K562 (cell line): ENCODE measurements at regions of chr10 and their contacts with region 1.

Region 1: DNA sequence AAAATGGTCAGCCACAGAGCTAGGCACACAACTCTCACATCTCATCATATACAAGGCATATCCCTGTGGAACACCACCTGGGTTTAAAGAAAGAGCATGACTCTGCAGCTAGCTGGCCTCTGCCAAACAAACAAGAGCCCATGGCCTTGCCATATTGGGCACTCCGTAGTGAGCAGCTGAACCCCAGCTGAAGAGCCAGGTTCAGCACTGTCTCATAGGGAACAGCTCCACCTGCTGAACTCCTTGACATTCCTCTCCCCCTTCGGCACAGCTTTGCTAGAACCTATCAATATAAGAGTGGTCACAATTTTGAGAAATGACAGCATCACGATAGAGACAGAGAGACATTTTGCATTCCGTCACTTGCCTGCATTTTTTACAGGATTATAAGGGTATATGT is 20.0 kb downstream of the SORCS1 start:
- DNase-seq: peak in 2 of 4 experiments; percentile 8 to 31
- ATAC-seq: peak; percentile 84
- H3K4me3 ChIP-seq: no peak overlapping the region
- H3K27ac ChIP-seq: no peak overlapping the region
- H3K4me1 ChIP-seq: no peaks in the 10 kb centered on the region
- H3K27me3 ChIP-seq: no peaks in the 10 kb centered on the region
- CTCF ChIP-seq: peak; percentile 33 to 45 (median 39); a peak in 5 of 6 replicates
- EP300 ChIP-seq: no peak
- POLR2A ChIP-seq: no peak
- RAD21 ChIP-seq: peak; percentile 50 to 67

Region 2: GRCh38 chr10:106711313-106711906 is 433.1 kb before region 1 on chr10:
- CTCF ChIA-PET with region 1: no interaction called
- POLR2A ChIA-PET with region 1: no interaction called
- in situ Hi-C with region 1: no loop called
- intact Hi-C with region 1: loop called (anchors 5 kb)
- DNase-seq: peak; percentile 64 to 74 (median 70)
- ATAC-seq: peak; percentile 86
- H3K4me3 ChIP-seq: no peak overlapping the region
- H3K27ac ChIP-seq: no peak overlapping the region
- H3K4me1 ChIP-seq: no peaks in the 10 kb centered on the region
- H3K27me3 ChIP-seq: no peaks in the 10 kb centered on the region
- CTCF ChIP-seq: peak; percentile 55 to 69 (median 68)
- EP300 ChIP-seq: no peak
- POLR2A ChIP-seq: no peak
- RAD21 ChIP-seq: peak; percentile 58 to 74

Region 3: GRCh38 chr10:106795619-106796018 is 348.9 kb before region 1 on chr10:
- CTCF ChIA-PET with region 1: no interaction called
- POLR2A ChIA-PET with region 1: no interaction called
- in situ Hi-C with region 1: no loop called
- intact Hi-C with region 1: loop called (anchors 1 kb)
- DNase-seq: peak; percentile 17 to 44 (median 28)
- ATAC-seq: peak; percentile 78
- H3K4me3 ChIP-seq: no peak overlapping the region
- H3K27ac ChIP-seq: no peak overlapping the region
- H3K4me1 ChIP-seq: no peaks in the 10 kb centered on the region
- H3K27me3 ChIP-seq: no peaks in the 10 kb centered on the region
- CTCF ChIP-seq: peak; percentile 35 to 58 (median 58); a peak in 5 of 6 replicates
- EP300 ChIP-seq: no peak
- POLR2A ChIP-seq: no peak
- RAD21 ChIP-seq: peak; percentile 51 to 77

Region 4: GRCh38 chr10:106863549-106863948 is 280.9 kb before region 1 on chr10:
- CTCF ChIA-PET with region 1: no interaction called
- POLR2A ChIA-PET with region 1: no interaction called
- in situ Hi-C with region 1: no loop called
- intact Hi-C with region 1: loop called (anchors 1 kb)
- DNase-seq: peak in 2 of 4 experiments; percentile 12 to 24
- ATAC-seq: peak; percentile 73
- H3K4me3 ChIP-seq: no peak overlapping the region
- H3K27ac ChIP-seq: no peak overlapping the region
- H3K4me1 ChIP-seq: no peaks in the 10 kb centered on the region; a peak in 1 of 5 replicates
- H3K27me3 ChIP-seq: no peaks in the 10 kb centered on the region
- CTCF ChIP-seq: peak; percentile 36 to 43 (median 41)
- EP300 ChIP-seq: no peak
- POLR2A ChIP-seq: no peak
- RAD21 ChIP-seq: peak in 1 of 2 experiments; percentile 56; a peak in 2 of 4 replicates

Region 5: GRCh38 chr10:107163881-107164861 is 19.7 kb after region 1 on chr10 and contains the start of gene SORCS1:
- CTCF ChIA-PET with region 1: no interaction called
- POLR2A ChIA-PET with region 1: no interaction called
- in situ Hi-C with region 1: no loop called
- intact Hi-C with region 1: no loop called
- DNase-seq: peak in 3 of 4 experiments; percentile 4 to 8 (median 6)
- ATAC-seq: peak; percentile 52; the same call in 2 of the 3 replicates
- H3K4me3 ChIP-seq: no peak within 1 kb of the TSS
- H3K27ac ChIP-seq: no peak within 1 kb of the TSS
- H3K4me1 ChIP-seq: peaks cover 0 to 12% of the 10 kb centered on the region in 2 experiments; a peak in 2 of 5 replicates
- H3K27me3 ChIP-seq: peaks cover 0 to 14% of the 10 kb centered on the region in 2 experiments; a peak in 3 of 5 replicates
- CTCF ChIP-seq: no peak
- EP300 ChIP-seq: no peak
- POLR2A ChIP-seq: no peak
- RAD21 ChIP-seq: no peak
- polyA plus RNA-seq, gene SORCS1: 1.5 to 2.6 TPM